ENCODE measurements at regions of chr22 and their contacts with region 1.

Region 1: GRCh38 chr22:50250555-50251476 is at the start of gene HDAC10:
- DNase-seq: peak; percentile 76
- ATAC-seq: peak; percentile 82
- H3K4me3 Mint-ChIP-seq: peak within 1 kb of the TSS; percentile 84
- H3K27ac Mint-ChIP-seq: peak within 1 kb of the TSS; percentile 4
- H3K4me1 Mint-ChIP-seq: peaks cover 25% of the 10 kb centered on the region
- H3K27me3 Mint-ChIP-seq: no peaks in the 10 kb centered on the region
- CTCF ChIP-seq: no peak
- total RNA-seq, gene HDAC10: 65.0 and 68.2 TPM in 2 replicates

Region 2: DNA sequence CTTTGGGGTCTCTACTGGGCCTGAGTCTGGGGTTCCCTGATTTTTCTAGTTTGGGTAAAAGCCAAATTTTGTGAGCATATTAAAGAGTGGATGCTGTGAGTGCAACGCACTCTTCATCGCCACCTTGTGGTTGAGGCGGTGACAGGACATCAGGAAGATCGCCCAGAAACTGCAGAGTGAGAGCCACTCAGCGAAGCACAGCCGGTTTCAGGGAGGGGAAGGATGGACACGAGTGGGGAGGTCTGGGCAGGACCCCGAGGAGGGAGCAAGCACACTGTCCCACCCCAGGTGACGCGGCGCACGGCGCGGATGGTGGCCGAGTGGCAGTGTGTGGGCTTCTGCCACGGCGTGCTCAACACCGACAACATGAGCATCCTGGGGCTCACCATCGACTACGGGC is 40.9 kb before region 1 on chr22:
- CTCF ChIA-PET with region 1: no interaction called
- POLR2A ChIA-PET with region 1: no interaction called
- intact Hi-C with region 1: no loop called
- DNase-seq: peak; percentile 60
- ATAC-seq: peak; percentile 54
- H3K4me3 Mint-ChIP-seq: no peak overlapping the region
- H3K27ac Mint-ChIP-seq: peak overlapping the region; percentile 35
- H3K4me1 Mint-ChIP-seq: peaks cover 27% of the 10 kb centered on the region
- H3K27me3 Mint-ChIP-seq: no peaks in the 10 kb centered on the region
- CTCF ChIP-seq: no peak

Region 3: GRCh38 chr22:50260801-50261614 is 10.2 kb after region 1 on chr22:
- CTCF ChIA-PET with region 1: interaction called, 3 read pairs
- POLR2A ChIA-PET with region 1: interaction called, 17 read pairs
- intact Hi-C with region 1: loop called (anchors 1 kb)
- DNase-seq: no peak
- ATAC-seq: peak; percentile 35
- H3K4me3 Mint-ChIP-seq: peak overlapping the region; percentile 15
- H3K27ac Mint-ChIP-seq: no peak overlapping the region
- H3K4me1 Mint-ChIP-seq: peaks cover 18% of the 10 kb centered on the region
- H3K27me3 Mint-ChIP-seq: peaks cover 13% of the 10 kb centered on the region
- CTCF ChIP-seq: no peak

Region 4: DNA sequence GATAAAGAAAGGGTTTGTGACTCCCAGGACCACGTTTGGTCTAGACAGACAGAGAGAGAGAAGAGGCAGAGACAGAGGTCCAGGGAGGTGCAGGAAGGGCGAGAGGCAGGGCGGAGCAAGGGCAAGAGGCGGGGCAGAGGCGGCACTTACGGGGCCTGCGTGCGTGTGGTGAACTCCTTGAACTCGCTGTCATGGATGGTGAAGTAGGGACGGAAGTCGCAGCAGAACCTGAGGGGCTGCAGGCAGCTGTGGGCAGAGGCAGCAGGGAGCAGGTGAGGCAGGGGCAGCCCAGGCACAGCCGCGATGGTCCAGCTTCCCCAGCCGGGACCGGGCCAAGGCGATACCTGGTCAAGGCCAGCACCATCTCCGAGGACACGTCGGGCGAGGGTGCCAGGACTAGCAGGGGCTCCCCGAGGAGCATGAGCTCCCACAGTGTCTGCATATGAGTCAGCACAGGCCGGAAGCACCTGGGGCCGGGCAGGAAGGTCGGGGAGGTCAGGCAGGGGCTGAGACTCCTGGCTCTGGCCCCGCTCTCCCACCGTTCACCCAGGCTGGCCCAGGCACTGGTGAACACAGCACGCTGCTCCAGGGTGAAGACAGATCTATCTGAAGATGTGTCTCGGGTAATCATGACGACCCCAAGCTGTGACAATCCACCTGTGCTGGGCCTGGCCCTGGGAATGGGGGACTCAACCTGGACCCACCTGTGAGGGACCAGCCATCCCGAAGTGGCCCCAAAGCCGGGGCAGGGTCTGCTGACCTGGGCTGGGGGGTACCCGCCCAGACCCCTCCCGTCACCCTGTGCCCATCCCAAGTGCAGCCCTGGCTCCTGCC is 63.9 kb after region 1 on chr22:
- CTCF ChIA-PET with region 1: no interaction called
- POLR2A ChIA-PET with region 1: no interaction called
- intact Hi-C with region 1: no loop called
- DNase-seq: peak; percentile 76
- ATAC-seq: peak; percentile 90
- H3K4me3 Mint-ChIP-seq: peak overlapping the region; percentile 77
- H3K27ac Mint-ChIP-seq: peak overlapping the region; percentile 86
- H3K4me1 Mint-ChIP-seq: peaks cover 52% of the 10 kb centered on the region
- H3K27me3 Mint-ChIP-seq: no peaks in the 10 kb centered on the region
- CTCF ChIP-seq: no peak

Region 5: DNA sequence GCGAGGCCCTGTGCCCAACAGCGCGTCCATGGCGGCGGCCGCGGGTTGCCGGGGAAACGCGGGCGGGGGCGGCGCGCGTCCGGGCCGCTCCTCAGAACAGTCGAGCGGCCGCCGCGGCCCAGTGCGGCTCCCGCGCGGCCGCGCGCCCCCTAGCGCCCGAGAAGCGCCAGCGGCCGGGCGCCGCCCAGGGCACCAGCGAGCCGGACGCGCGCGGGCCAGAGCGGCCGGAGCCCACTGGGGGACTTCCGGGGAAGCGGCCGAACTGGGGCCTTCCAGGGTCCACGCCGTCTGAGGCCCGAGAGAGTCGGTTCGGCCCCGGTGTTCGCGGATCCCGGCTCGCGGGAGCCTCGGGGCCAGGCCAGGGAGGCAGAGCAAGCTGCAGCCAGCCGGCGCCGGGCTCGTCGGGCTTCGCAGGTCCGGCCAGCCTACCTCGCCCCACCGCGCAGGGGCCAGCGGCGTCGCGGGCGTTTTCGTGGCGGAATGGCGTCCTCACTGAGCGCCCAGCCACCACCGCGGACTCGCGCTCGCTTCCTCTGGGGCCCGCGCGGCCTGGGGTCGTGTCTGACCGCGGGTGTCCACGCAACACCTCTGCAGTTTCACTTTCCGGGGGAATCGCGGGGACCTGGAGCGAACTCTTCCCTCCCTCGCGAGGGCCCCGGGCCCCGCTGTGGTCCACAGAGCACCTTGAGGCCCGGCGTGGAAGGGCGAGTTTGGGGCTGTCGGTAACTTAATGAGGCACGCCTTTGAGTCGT is 76.3 kb after region 1 on chr22 and contains the start of gene DENND6B:
- CTCF ChIA-PET with region 1: interaction called, 18 read pairs
- POLR2A ChIA-PET with region 1: interaction called, 8 read pairs
- intact Hi-C with region 1: loop called (anchors 1 kb)
- DNase-seq: peak; percentile 82
- ATAC-seq: peak; percentile 92
- H3K4me3 Mint-ChIP-seq: peak within 1 kb of the TSS; percentile 86
- H3K27ac Mint-ChIP-seq: peak within 1 kb of the TSS; percentile 76
- H3K4me1 Mint-ChIP-seq: peaks cover 20% of the 10 kb centered on the region
- H3K27me3 Mint-ChIP-seq: peaks cover 3% of the 10 kb centered on the region
- CTCF ChIP-seq: no peak
- total RNA-seq, gene DENND6B: 3.2 and 5.2 TPM in 2 replicates

Region 6: GRCh38 chr22:50361688-50362087 is 110.9 kb after region 1 on chr22:
- CTCF ChIA-PET with region 1: interaction called, 4 read pairs
- POLR2A ChIA-PET with region 1: no interaction called
- intact Hi-C with region 1: loop called (anchors 1 kb)
- DNase-seq: no peak
- ATAC-seq: no peak
- H3K4me3 Mint-ChIP-seq: no peak overlapping the region
- H3K27ac Mint-ChIP-seq: no peak overlapping the region
- H3K4me1 Mint-ChIP-seq: peaks cover 17% of the 10 kb centered on the region
- H3K27me3 Mint-ChIP-seq: no peaks in the 10 kb centered on the region
- CTCF ChIP-seq: no peak

Region 7: GRCh38 chr22:50525390-50526068 is 274.7 kb after region 1 on chr22 and contains the start of gene SCO2:
- CTCF ChIA-PET with region 1: interaction called, 11 read pairs
- POLR2A ChIA-PET with region 1: interaction called, 17 read pairs
- intact Hi-C with region 1: loop called (anchors 1 kb)
- DNase-seq: peak; percentile 97
- ATAC-seq: peak; percentile 52
- H3K4me3 Mint-ChIP-seq: peak within 1 kb of the TSS; percentile 84
- H3K27ac Mint-ChIP-seq: peak within 1 kb of the TSS; percentile 90
- H3K4me1 Mint-ChIP-seq: peaks cover 33% of the 10 kb centered on the region
- H3K27me3 Mint-ChIP-seq: no peaks in the 10 kb centered on the region
- CTCF ChIP-seq: no peak
- total RNA-seq, gene SCO2: 7.1 and 11.6 TPM in 2 replicates

Measured in activated B cell treated with CpG ODN at 0.5 μM for 24 hours (primary cell).